ENCODE measurements at regions of chr1 and their contacts with region 1.

Region 1: DNA sequence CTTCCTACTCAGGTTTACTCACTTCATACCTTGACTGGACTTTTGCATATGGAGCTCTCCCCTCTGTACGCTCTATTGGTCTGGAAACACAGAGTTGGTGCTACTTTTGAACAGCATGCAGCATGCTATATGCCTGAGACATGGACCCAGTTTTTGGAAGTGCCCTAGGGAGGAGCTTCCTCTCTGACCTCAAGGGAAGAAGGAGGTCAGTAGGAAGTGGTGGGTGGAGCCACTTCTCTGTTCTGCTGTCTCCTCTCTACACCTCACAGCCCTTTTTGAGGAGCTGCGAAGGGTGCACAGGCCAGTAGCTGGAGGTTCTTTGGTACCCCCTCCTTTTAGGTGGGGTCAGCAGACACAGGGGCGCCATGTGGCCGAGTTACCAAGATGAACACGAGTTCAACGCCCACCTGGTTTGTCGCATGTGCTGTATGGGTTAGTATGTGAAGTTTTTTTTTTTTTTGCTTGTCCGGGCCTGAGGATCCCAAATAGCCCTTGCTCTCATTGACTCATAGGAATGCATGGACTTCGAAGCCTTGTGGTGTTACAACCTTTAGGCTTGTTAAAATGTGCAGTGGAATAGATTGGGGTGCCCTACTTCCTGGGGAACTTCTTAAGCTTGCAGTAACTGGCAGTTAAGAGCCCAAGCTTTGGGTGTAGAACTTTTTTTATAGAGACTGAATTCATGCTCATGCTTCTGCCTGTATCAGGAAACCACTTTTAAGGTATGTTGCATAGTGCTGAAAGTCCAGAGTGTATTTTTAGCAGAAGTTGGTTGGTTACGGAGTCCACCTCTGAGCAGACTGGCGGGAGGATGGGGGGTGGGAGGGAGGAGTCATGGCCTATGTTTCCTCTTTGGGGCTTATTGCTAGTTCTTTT is 10.7 kb downstream of the MACF1 start:
- DNase-seq: peak; percentile 84
- H3K4me3 Mint-ChIP-seq: peak overlapping the region; percentile 82
- H3K27ac Mint-ChIP-seq: peak overlapping the region; percentile 93
- H3K4me1 Mint-ChIP-seq: peaks cover 55% of the 10 kb centered on the region
- H3K27me3 Mint-ChIP-seq: no peaks in the 10 kb centered on the region

Region 2: DNA sequence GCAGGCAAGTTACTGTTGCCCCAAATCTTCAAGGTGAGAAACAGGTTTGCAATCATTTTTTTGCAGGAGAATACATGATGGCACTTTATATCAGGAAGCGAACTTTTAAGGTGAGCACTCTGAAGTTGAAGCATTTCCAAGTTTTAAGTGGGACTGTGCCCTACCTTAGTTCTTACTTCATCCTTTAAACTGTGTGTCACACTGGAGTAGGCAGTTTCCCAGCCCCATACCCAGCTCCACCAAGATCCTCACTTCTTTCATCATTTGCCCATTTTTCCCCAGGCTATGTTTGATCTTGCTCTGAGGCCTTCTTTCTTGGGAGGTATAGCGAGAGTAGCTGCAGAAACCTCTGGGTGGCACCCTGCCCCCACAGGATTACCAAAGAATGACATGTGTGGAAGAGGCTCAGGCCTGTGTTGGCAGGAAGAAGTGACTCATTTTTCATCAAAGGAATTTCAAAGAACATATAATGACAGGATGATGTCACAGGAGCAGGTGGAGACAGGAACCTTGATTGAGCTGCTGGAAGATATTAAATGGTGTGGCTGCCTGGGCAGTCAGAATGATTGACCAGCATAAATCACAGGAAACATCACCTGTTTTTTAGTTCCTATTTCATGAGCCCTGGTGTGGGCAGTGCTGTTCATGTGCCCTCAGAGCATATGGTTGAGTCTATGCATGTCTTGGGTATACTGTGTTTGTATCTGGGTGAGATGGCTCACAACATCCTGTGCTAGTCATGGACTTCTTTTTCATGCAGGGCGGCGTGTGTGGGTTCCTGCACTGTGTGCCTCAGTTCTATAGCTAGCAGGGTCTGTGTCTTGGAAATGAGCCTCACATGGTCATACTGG is 31.5 kb before region 1 on chr1:
- intact Hi-C with region 1: loop called (anchors 5 kb)
- DNase-seq: peak; percentile 94
- H3K4me3 Mint-ChIP-seq: peak overlapping the region; percentile 74
- H3K27ac Mint-ChIP-seq: peak overlapping the region; percentile 97
- H3K4me1 Mint-ChIP-seq: peaks cover 45% of the 10 kb centered on the region
- H3K27me3 Mint-ChIP-seq: no peaks in the 10 kb centered on the region

Region 3: GRCh38 chr1:39230261-39231190 is 15.3 kb after region 1 on chr1:
- intact Hi-C with region 1: loop called (anchors 2 kb)
- DNase-seq: peak; percentile 70
- H3K4me3 Mint-ChIP-seq: peak overlapping the region; percentile 39
- H3K27ac Mint-ChIP-seq: peak overlapping the region; percentile 42
- H3K4me1 Mint-ChIP-seq: peaks cover 40% of the 10 kb centered on the region
- H3K27me3 Mint-ChIP-seq: no peaks in the 10 kb centered on the region

Region 4: GRCh38 chr1:39250460-39251240 is 35.4 kb after region 1 on chr1:
- intact Hi-C with region 1: loop called (anchors 5 kb)
- DNase-seq: no peak
- H3K4me3 Mint-ChIP-seq: no peak overlapping the region
- H3K27ac Mint-ChIP-seq: no peak overlapping the region
- H3K4me1 Mint-ChIP-seq: peaks cover 19% of the 10 kb centered on the region
- H3K27me3 Mint-ChIP-seq: no peaks in the 10 kb centered on the region